ENCODE measurements at regions of chr7 and their contacts with region 1.

Region 1: GRCh38 chr7:134690016-134690415 is 43.4 kb downstream of the BPGM start:
- DNase-seq: no peak
- ATAC-seq: no peak
- H3K4me3 Mint-ChIP-seq: no peak overlapping the region
- H3K27ac Mint-ChIP-seq: no peak overlapping the region
- H3K4me1 Mint-ChIP-seq: peaks cover 12% of the 10 kb centered on the region
- H3K27me3 Mint-ChIP-seq: peaks cover 5% of the 10 kb centered on the region
- CTCF ChIP-seq: peak; percentile 22

Region 2: GRCh38 chr7:134701272-134701671 is 11.3 kb after region 1 on chr7:
- CTCF ChIA-PET with region 1: interaction called, 21 read pairs
- POLR2A ChIA-PET with region 1: no interaction called
- intact Hi-C with region 1: no loop called
- DNase-seq: peak; percentile 51
- ATAC-seq: peak; percentile 67
- H3K4me3 Mint-ChIP-seq: no peak overlapping the region
- H3K27ac Mint-ChIP-seq: no peak overlapping the region
- H3K4me1 Mint-ChIP-seq: no peaks in the 10 kb centered on the region
- H3K27me3 Mint-ChIP-seq: no peaks in the 10 kb centered on the region
- CTCF ChIP-seq: peak; percentile 51

Region 3: GRCh38 chr7:134712196-134712595 is 22.2 kb after region 1 on chr7:
- CTCF ChIA-PET with region 1: no interaction called
- POLR2A ChIA-PET with region 1: no interaction called
- intact Hi-C with region 1: no loop called
- DNase-seq: no peak
- ATAC-seq: no peak
- H3K4me3 Mint-ChIP-seq: no peak overlapping the region
- H3K27ac Mint-ChIP-seq: no peak overlapping the region
- H3K4me1 Mint-ChIP-seq: peaks cover 17% of the 10 kb centered on the region
- H3K27me3 Mint-ChIP-seq: no peaks in the 10 kb centered on the region
- CTCF ChIP-seq: no peak

Region 4: DNA sequence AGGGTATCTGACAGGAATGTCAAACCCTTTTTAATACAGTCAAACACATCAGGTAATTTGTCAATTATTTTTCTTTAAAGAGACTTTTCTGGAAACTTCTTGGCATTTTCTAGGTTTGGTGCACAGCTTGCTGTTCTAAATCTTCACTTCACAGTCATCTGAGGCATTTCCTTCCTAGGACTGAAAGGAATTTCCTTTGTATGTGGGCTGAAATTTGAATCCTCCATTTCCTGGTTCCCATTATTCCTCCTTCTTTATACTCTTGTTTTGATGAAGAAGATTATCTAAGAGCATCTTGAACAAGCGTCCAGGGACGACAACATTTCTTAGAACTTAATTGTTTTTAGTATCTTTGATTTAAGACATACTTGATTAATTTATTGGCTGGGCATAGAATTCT is 114.3 kb after region 1 on chr7:
- CTCF ChIA-PET with region 1: no interaction called
- POLR2A ChIA-PET with region 1: no interaction called
- intact Hi-C with region 1: no loop called
- DNase-seq: no peak
- ATAC-seq: no peak
- H3K4me3 Mint-ChIP-seq: no peak overlapping the region
- H3K27ac Mint-ChIP-seq: no peak overlapping the region
- H3K4me1 Mint-ChIP-seq: no peaks in the 10 kb centered on the region
- H3K27me3 Mint-ChIP-seq: no peaks in the 10 kb centered on the region
- CTCF ChIP-seq: no peak

Region 5: GRCh38 chr7:134954197-134955082 is 264.4 kb after region 1 on chr7:
- CTCF ChIA-PET with region 1: interaction called, 7 read pairs
- POLR2A ChIA-PET with region 1: no interaction called
- intact Hi-C with region 1: loop called (anchors 10 kb)
- DNase-seq: no peak
- ATAC-seq: no peak
- H3K4me3 Mint-ChIP-seq: no peak overlapping the region
- H3K27ac Mint-ChIP-seq: no peak overlapping the region
- H3K4me1 Mint-ChIP-seq: no peaks in the 10 kb centered on the region
- H3K27me3 Mint-ChIP-seq: no peaks in the 10 kb centered on the region
- CTCF ChIP-seq: peak; percentile 77